ENCODE measurements at regions of chr6 and their contacts with region 1.

Region 1: GRCh38 chr6:41683510-41684310 is 45.4 kb downstream of the MDFI start:
- DNase-seq: peak; percentile 84
- H3K4me3 Mint-ChIP-seq: peak overlapping the region; percentile 75
- H3K27ac Mint-ChIP-seq: peak overlapping the region; percentile 87
- H3K4me1 Mint-ChIP-seq: peaks cover 8% of the 10 kb centered on the region
- H3K27me3 Mint-ChIP-seq: no peaks in the 10 kb centered on the region

Region 2: GRCh38 chr6:41306187-41306854 is 377.4 kb before region 1 on chr6:
- CTCF ChIA-PET with region 1: interaction called, 3 read pairs
- intact Hi-C with region 1: loop called (anchors 2 kb)
- DNase-seq: peak; percentile 73
- H3K4me3 Mint-ChIP-seq: no peak overlapping the region
- H3K27ac Mint-ChIP-seq: no peak overlapping the region
- H3K4me1 Mint-ChIP-seq: peaks cover 18% of the 10 kb centered on the region
- H3K27me3 Mint-ChIP-seq: no peaks in the 10 kb centered on the region

Region 3: GRCh38 chr6:41602864-41603608 is 80.7 kb before region 1 on chr6:
- CTCF ChIA-PET with region 1: interaction called, 65 read pairs
- intact Hi-C with region 1: loop called (anchors 1 kb)
- DNase-seq: peak; percentile 90
- H3K4me3 Mint-ChIP-seq: no peak overlapping the region
- H3K27ac Mint-ChIP-seq: no peak overlapping the region
- H3K4me1 Mint-ChIP-seq: peaks cover 4% of the 10 kb centered on the region
- H3K27me3 Mint-ChIP-seq: no peaks in the 10 kb centered on the region

Region 4: GRCh38 chr6:41694815-41695526 is 11.3 kb after region 1 on chr6:
- CTCF ChIA-PET with region 1: interaction called, 22 read pairs
- intact Hi-C with region 1: no loop called
- DNase-seq: no peak
- H3K4me3 Mint-ChIP-seq: no peak overlapping the region
- H3K27ac Mint-ChIP-seq: no peak overlapping the region
- H3K4me1 Mint-ChIP-seq: no peaks in the 10 kb centered on the region
- H3K27me3 Mint-ChIP-seq: no peaks in the 10 kb centered on the region

Region 5: GRCh38 chr6:41735427-41736356 is 52.0 kb after region 1 on chr6 and contains the start of gene TFEB:
- CTCF ChIA-PET with region 1: interaction called, 5 read pairs
- intact Hi-C with region 1: loop called (anchors 2 kb)
- DNase-seq: peak; percentile 96
- H3K4me3 Mint-ChIP-seq: peak within 1 kb of the TSS; percentile 72
- H3K27ac Mint-ChIP-seq: no peak within 1 kb of the TSS
- H3K4me1 Mint-ChIP-seq: peaks cover 21% of the 10 kb centered on the region
- H3K27me3 Mint-ChIP-seq: no peaks in the 10 kb centered on the region
- total RNA-seq, gene TFEB: 5.7 to 7.9 TPM

Region 6: GRCh38 chr6:42009966-42010891 is 326.5 kb after region 1 on chr6:
- CTCF ChIA-PET with region 1: no interaction called
- intact Hi-C with region 1: no loop called
- DNase-seq: peak; percentile 86
- H3K4me3 Mint-ChIP-seq: peak overlapping the region; percentile 83
- H3K27ac Mint-ChIP-seq: peak overlapping the region; percentile 100
- H3K4me1 Mint-ChIP-seq: peaks cover 76% of the 10 kb centered on the region
- H3K27me3 Mint-ChIP-seq: no peaks in the 10 kb centered on the region